ENCODE measurements at regions of chr7 and their contacts with region 1.

Region 1: GRCh38 chr7:121395961-121396757 is at the start of gene FAM3C:
- DNase-seq: peak; percentile 83
- H3K4me3 Mint-ChIP-seq: peak within 1 kb of the TSS; percentile 88
- H3K27ac Mint-ChIP-seq: peak within 1 kb of the TSS; percentile 95
- H3K4me1 Mint-ChIP-seq: peaks cover 51% of the 10 kb centered on the region
- H3K27me3 Mint-ChIP-seq: no peaks in the 10 kb centered on the region
- total RNA-seq, gene FAM3C: 103 and 114 TPM in 2 replicates

Region 2: GRCh38 chr7:120950539-120951308 is 445.4 kb before region 1 on chr7 and contains the start of gene ING3:
- intact Hi-C with region 1: loop called (anchors 1 kb)
- DNase-seq: peak; percentile 97
- H3K4me3 Mint-ChIP-seq: peak within 1 kb of the TSS; percentile 87
- H3K27ac Mint-ChIP-seq: peak within 1 kb of the TSS; percentile 92
- H3K4me1 Mint-ChIP-seq: peaks cover 34% of the 10 kb centered on the region
- H3K27me3 Mint-ChIP-seq: peaks cover 10% of the 10 kb centered on the region
- total RNA-seq, gene ING3: 26.7 and 28.6 TPM in 2 replicates

Region 3: GRCh38 chr7:121372376-121373010 is 23.7 kb before region 1 on chr7:
- intact Hi-C with region 1: loop called (anchors 1 kb)
- DNase-seq: no peak
- H3K4me3 Mint-ChIP-seq: peak overlapping the region; percentile 38
- H3K27ac Mint-ChIP-seq: peak overlapping the region; percentile 80
- H3K4me1 Mint-ChIP-seq: peaks cover 76% of the 10 kb centered on the region
- H3K27me3 Mint-ChIP-seq: no peaks in the 10 kb centered on the region

Region 4: GRCh38 chr7:121385800-121386179 is 10.4 kb before region 1 on chr7:
- intact Hi-C with region 1: loop called (anchors 1 kb)
- DNase-seq: no peak
- H3K4me3 Mint-ChIP-seq: peak overlapping the region; percentile 6
- H3K27ac Mint-ChIP-seq: no peak overlapping the region
- H3K4me1 Mint-ChIP-seq: peaks cover 93% of the 10 kb centered on the region
- H3K27me3 Mint-ChIP-seq: no peaks in the 10 kb centered on the region

Region 5: GRCh38 chr7:121500360-121501058 is 104.3 kb after region 1 on chr7:
- intact Hi-C with region 1: loop called (anchors 1 kb)
- DNase-seq: no peak
- H3K4me3 Mint-ChIP-seq: no peak overlapping the region
- H3K27ac Mint-ChIP-seq: peak overlapping the region; percentile 90
- H3K4me1 Mint-ChIP-seq: peaks cover 41% of the 10 kb centered on the region
- H3K27me3 Mint-ChIP-seq: no peaks in the 10 kb centered on the region